H1 (cell line): ENCODE measurements at regions of chr1 and their contacts with region 1.

Region 1: GRCh38 chr1:244092293-244092963 is 41.3 kb downstream of the ZBTB18 start:
- DNase-seq: no peak
- H3K4me3 ChIP-seq: no peak overlapping the region
- H3K27ac ChIP-seq: no peak overlapping the region
- H3K4me1 ChIP-seq: no peaks in the 10 kb centered on the region
- H3K27me3 ChIP-seq: no peaks in the 10 kb centered on the region
- CTCF ChIP-seq: no peak
- EP300 ChIP-seq: no peak
- POLR2A ChIP-seq: no peak
- RAD21 ChIP-seq: no peak

Region 2: DNA sequence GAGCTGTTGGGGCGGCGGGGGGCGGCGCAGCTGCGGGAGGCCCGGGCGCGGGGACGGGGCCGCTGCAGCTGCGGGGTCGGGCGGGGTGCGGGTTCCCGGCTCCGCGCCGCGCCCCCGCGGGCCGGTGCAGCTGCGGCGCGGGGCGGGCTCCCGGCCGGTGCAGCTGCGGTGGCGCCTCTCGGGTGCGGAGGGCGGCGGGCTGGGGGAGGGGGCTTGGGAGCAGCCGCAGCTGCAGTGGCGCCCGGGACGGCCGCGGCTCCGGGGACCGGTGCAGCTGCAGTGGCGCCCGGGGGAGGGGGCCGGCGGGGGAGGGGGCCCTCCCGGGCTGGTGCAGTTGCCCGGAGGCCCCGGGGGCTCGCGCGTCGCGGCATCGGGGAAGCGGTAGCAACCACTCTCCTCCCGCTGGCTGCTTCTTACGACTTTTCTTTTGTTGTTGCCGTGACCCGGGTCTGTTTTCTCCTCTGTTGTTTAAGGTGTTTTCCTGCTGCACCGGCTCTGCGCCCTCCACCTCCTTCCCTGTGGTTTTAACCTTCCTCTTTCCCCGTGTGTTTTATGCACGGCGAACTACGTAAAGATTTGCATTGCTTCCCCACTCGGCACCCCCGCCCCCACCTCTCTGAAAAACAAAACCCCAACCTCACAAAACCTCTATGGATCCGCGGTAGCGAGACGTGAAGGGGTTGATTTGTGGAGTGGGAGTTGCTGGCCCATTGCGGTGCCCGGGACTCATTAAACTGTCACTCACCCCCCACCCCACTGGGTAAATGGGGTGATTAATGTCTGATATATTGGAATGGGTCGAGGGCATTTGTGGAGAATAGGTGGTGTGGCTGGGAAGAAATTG is 43.0 kb before region 1 on chr1:
- CTCF ChIA-PET with region 1: no interaction called
- POLR2A ChIA-PET with region 1: no interaction called
- DNase-seq: no peak
- H3K4me3 ChIP-seq: peak overlapping the region; percentile 78 to 91 (median 84)
- H3K27ac ChIP-seq: no peak overlapping the region
- H3K4me1 ChIP-seq: peaks cover 3 to 18% (median 9%) of the 10 kb centered on the region in 4 experiments; a peak in 6 of 7 replicates
- H3K27me3 ChIP-seq: peaks cover 0 to 8% (median 5%) of the 10 kb centered on the region in 4 experiments; a peak in 3 of 7 replicates
- CTCF ChIP-seq: no peak
- EP300 ChIP-seq: no peak
- POLR2A ChIP-seq: no peak
- RAD21 ChIP-seq: no peak

Region 3: GRCh38 chr1:244077473-244078220 is 14.8 kb before region 1 on chr1:
- CTCF ChIA-PET with region 1: interaction called, 11 read pairs
- POLR2A ChIA-PET with region 1: interaction called, 3 read pairs
- DNase-seq: peak in 1 of 2 experiments; percentile 44
- H3K4me3 ChIP-seq: no peak overlapping the region
- H3K27ac ChIP-seq: no peak overlapping the region
- H3K4me1 ChIP-seq: peaks cover 0 to 6% (median 4%) of the 10 kb centered on the region in 4 experiments; a peak in 5 of 7 replicates
- H3K27me3 ChIP-seq: peaks cover 0 to 2% (median 0%) of the 10 kb centered on the region in 4 experiments; a peak in 1 of 7 replicates
- CTCF ChIP-seq: no peak
- EP300 ChIP-seq: no peak
- POLR2A ChIP-seq: no peak
- RAD21 ChIP-seq: no peak